Posterior vena cava (tissue), 2 donors: ENCODE measurements at regions of chr11 and their contacts with region 1.

Region 1: DNA sequence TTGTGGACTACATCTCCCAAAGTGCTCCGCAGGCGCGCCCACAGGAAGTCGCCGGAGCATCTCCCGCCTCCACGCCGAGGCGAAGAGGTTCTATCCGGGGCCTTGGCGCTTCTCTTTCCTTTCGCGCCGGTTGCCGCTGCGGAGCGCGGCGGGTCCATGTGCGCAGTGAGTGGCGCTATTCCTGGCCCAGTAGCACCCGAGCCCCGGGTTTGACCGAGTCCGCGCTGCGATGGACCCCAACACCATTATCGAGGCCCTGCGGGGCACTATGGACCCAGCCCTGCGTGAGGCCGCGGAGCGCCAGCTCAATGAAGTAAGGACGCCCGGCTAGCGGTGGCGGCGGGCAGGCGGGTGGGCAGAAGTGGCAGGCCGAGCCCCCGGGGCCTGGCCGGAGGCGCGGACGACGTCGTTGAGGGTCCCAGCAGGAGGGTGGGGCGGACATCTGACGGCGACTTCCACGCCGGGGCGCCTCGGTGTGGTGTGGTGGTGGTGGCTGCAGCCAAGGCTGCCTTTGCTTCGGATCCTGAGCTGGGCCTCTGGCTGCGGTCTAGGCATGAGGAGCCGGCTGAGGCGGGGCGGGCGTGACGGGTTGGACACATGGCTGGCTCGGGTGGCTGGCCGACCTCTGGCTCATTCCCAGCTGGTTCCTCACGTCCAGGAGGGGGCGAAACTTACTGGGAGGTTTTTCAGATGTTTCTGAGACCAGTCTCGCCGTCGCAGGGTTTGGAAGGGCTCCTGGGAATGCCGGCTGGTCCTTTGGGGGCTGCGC is at the start of gene IPO7:
- DNase-seq: peak; percentile 97
- total RNA-seq, gene IPO7: 107 to 169 TPM

Region 2: GRCh38 chr11:8624698-8625097 is 760.0 kb before region 1 on chr11:
- intact Hi-C with region 1: no loop called
- DNase-seq: no peak

Region 3: DNA sequence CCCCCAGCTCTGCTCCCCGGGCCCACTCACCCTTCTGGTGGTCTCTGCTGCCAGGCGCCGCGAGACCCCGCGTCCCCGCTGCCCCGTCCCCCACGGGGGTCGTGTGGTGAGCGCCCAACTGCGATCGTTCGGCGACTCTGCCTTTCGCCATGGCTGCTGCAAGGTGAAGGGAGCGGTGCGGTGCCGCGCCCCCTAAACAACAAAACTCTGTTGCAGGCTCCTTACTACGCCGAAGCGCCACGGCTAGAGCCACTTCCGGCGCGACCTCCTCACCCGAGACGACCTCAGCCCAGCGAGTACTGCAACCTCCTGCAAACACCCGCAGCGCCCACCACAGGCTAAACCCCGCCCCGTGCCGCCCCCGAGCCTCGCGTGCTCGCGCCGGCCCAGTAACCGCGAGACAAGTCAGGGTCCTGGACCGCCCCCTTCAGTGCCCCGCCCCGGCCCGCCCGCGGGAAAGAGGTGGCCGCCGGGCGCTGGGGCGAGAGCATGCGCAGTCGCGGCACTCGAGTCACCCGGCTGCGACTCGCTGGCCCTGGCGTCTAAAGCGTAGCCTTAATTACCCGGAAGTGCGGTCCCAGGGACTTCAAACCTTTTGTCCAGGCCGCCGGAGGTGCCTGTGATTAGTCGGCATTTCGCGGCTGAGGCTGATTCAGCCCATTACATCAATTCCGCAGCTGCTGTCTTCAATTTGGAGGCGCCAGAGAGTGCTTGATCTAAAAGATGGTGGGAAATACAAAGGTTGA is 70.3 kb before region 1 on chr11 and contains the start of gene TMEM41B:
- intact Hi-C with region 1: loop called in 1 of 2 experiments (anchors 10 kb)
- DNase-seq: peak; percentile 100
- total RNA-seq, gene TMEM41B: 16.8 to 18.0 TPM

Region 4: GRCh38 chr11:9438611-9439010 is 53.9 kb after region 1 on chr11:
- intact Hi-C with region 1: no loop called
- DNase-seq: no peak

Region 5: GRCh38 chr11:9757809-9758636 is 373.3 kb after region 1 on chr11:
- intact Hi-C with region 1: no loop called
- DNase-seq: peak; percentile 96